ENCODE measurements at regions of chr14 and their contacts with region 1.

Region 1: DNA sequence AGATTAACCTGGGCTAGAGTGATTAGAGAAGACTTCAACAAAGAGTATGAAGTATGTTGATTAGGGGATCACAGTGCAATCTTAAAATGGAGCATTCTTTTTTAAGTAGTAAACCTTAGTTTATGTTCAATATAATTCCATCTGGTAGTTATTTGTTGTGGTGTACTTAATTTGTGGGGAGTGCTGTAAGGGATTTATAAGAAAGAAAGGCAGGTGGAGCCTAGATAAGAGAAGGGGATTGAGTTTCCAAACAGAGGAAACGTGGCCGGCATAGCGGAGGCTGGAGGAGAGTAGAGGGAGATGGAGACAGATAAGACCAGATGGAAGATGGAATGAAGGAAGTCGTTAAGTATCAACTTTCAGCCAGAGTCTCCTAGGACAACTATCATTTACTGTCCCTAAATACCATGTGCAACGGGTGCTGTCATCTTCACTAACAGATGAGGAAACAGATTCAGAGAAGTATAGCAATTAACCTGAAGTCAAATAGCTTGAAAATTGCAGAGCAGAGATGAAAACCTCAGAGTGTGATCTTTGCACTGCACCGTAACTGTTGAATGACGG is 38.1 kb downstream of the GOLGA5 start:
- DNase-seq: no peak
- ATAC-seq: no peak
- H3K4me3 ChIP-seq: no peak overlapping the region
- H3K27ac ChIP-seq: no peak overlapping the region
- H3K4me1 ChIP-seq: no peaks in the 10 kb centered on the region
- H3K27me3 ChIP-seq: no peaks in the 10 kb centered on the region
- CTCF ChIP-seq: no peak

Region 2: DNA sequence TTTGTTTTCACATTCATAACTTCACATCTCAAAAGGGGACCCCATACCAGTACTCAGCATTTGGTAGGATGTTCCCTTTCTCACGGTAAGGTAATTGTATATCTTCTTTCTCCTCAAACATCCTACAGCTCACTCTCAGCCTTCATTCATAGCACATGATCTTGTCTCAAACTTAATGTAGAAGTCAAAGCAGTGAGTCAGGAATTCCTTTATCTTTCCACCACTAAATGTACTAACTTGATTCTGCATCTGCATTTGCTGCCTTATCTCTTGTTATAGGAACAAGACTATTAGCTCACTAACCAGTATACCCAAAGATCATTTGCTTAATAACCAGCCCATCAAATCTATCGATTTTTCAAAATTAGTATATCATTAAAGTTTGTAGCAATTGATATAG is 687.5 kb before region 1 on chr14:
- intact Hi-C with region 1: loop called in 1 of 2 experiments (anchors 10 kb)
- DNase-seq: no peak
- ATAC-seq: no peak
- H3K4me3 ChIP-seq: no peak overlapping the region
- H3K27ac ChIP-seq: no peak overlapping the region
- H3K4me1 ChIP-seq: no peaks in the 10 kb centered on the region
- H3K27me3 ChIP-seq: no peaks in the 10 kb centered on the region
- CTCF ChIP-seq: no peak

Measured in psoas muscle (tissue), 8 donors.